WTC11 (cell line): ENCODE measurements at regions of chr1 and their contacts with region 1.

Region 1: GRCh38 chr1:26177182-26177684 is at the start of gene CNKSR1:
- DNase-seq: peak; percentile 94
- ATAC-seq: peak; percentile 100
- H3K4me3 Mint-ChIP-seq: peak within 1 kb of the TSS; percentile 82
- H3K27ac Mint-ChIP-seq: peak within 1 kb of the TSS; percentile 97
- H3K4me1 Mint-ChIP-seq: peaks cover 10% of the 10 kb centered on the region
- H3K27me3 Mint-ChIP-seq: no peaks in the 10 kb centered on the region
- CTCF ChIP-seq: no peak
- total RNA-seq, gene CNKSR1: 18.0 to 20.5 TPM (median 19.7 TPM) in 3 replicates

Region 2: GRCh38 chr1:26060832-26061574 is 116.2 kb before region 1 on chr1:
- CTCF ChIA-PET with region 1: no interaction called
- POLR2A ChIA-PET with region 1: no interaction called
- DNase-seq: no peak
- ATAC-seq: no peak
- H3K4me3 Mint-ChIP-seq: no peak overlapping the region
- H3K27ac Mint-ChIP-seq: no peak overlapping the region
- H3K4me1 Mint-ChIP-seq: no peaks in the 10 kb centered on the region
- H3K27me3 Mint-ChIP-seq: peaks cover 7% of the 10 kb centered on the region
- CTCF ChIP-seq: no peak

Region 3: GRCh38 chr1:26161415-26162219 is 15.6 kb before region 1 on chr1:
- CTCF ChIA-PET with region 1: interaction called, 14 read pairs
- POLR2A ChIA-PET with region 1: interaction called, 4 read pairs
- DNase-seq: peak; percentile 64
- ATAC-seq: peak; percentile 4; the same call in 1 of the 2 replicates
- H3K4me3 Mint-ChIP-seq: peak overlapping the region; percentile 74
- H3K27ac Mint-ChIP-seq: no peak overlapping the region
- H3K4me1 Mint-ChIP-seq: peaks cover 56% of the 10 kb centered on the region
- H3K27me3 Mint-ChIP-seq: peaks cover 92% of the 10 kb centered on the region
- CTCF ChIP-seq: no peak